Right ventricle myocardium superior (tissue), 1 donor: ENCODE measurements at regions of chr6 and their contacts with region 1.

Region 1: DNA sequence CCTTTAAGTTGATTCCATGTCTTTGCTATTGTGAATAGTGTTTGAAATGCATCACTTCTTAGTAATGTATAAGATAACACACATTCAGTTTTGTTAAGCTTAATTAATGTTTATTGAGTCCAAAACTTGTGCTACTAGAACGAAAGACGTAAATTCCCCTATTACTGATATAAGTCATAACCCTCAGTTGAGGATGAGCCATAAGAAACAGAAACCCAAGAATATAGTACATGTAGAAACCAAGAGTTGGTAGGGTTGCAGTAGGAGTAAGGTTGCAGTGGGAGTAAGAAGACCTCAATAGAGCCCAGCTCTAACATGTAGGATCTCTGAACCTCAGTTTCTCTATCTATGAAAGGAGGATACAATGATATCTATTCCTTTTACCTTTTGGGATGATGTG is 19.3 kb downstream of the CITED2 start:
- DNase-seq: no peak
- ATAC-seq: no peak

Region 2: DNA sequence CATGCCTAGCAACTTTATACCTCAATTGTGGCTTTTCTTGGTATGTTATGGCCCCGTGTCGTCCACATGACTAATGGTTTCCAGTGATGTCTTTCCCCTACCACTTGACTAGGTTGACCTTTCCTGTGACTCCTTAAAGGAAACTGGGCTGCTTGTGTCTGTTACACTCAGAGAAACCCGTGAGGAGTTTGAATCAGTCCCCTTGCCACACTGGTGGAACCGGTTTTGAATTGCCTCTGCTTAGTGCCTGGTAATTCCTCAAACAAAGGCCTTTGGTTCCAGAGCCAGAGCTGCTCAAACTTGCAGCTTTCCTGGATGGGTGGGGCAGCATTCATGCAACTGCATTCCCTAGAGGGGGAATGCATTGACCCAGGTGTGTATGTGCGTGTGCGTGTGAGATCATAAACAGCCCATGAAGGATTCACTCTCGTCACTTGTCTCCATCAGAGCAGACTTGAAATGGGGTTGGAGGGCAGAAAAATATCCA is 537.3 kb before region 1 on chr6:
- intact Hi-C with region 1: loop called (anchors 10 kb)
- DNase-seq: no peak
- ATAC-seq: peak; percentile 19

Region 3: DNA sequence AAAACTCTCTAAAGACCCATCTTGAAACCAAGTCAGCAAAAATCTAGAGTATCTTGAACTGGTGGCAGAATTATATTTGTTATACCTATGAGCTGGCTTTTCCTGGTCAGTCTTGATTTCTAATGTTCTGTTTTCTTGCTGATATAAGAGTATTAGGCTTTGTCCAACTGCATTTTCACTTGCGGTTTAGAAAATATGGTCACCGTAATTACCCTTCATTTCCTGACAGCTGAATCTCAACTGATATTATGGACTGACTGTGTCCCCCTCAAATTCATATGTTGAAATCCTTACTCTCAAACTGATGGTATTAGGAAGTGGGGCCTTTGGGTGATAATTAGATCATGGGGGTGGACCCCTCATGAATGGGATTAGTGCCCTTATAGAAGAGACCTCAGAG is 135.4 kb before region 1 on chr6:
- intact Hi-C with region 1: loop called (anchors 5 kb)
- DNase-seq: no peak
- ATAC-seq: no peak

Region 4: GRCh38 chr6:139291813-139292619 is 63.2 kb before region 1 on chr6 and contains the start of gene TXLNB:
- intact Hi-C with region 1: loop called (anchors 10 kb)
- DNase-seq: peak; percentile 90
- ATAC-seq: peak; percentile 84
- total RNA-seq, gene TXLNB: 125 TPM

Region 5: DNA sequence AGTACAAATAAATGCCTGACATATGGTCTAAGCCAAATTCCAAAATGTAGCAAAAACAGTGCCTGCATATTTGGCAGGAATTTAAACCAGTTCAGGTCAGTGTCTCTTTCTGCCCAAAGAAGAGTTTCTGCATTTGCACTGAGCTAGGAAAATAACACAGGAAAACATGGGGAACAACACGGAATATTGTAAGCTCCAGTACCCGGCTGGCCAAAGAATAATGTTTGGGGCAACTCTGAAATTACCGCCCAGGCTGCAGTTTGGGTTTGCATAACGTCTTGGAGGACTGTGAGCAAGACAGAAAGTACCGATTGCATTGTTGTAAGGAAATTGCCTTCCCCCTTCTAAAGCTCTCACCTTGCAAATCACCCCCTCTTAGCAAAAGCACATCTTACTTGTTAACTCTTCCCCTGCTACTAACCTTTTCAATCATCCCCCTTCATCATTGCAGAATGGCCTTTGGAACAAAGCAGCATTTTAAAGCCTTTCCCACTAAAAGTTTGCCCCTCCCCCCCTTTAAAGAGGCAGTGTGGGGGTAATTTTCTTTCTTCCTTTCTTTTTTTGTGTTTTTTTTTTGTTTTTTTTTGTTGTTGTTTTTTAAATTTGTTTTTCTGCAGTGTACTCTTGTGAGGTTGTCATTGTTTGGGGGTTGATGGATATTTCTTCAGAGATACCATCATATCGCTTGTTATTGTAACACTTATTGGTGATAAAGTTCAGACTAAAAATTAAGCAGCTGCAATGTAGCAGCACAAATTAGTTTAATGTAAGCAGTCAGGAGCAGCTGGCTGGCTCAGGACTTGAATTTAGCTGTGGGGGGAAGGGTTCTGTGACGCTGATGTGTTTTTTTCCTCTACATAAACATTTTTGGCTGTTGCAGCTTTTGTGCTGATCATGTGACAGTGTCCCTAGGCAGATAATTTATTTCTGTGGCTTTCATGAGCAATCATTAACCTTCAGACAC is 119.3 kb after region 1 on chr6:
- intact Hi-C with region 1: no loop called
- DNase-seq: no peak
- ATAC-seq: peak; percentile 42